Adrenal gland (tissue), 19 donors: ENCODE measurements at regions of chr15 and their contacts with region 1.

Region 1: GRCh38 chr15:58551764-58552504 is 120.1 kb downstream of the LIPC start:
- DNase-seq: peak in 2 of 7 donors; percentile 20 to 50
- H3K4me3 ChIP-seq: no peak overlapping the region
- H3K27ac ChIP-seq: peak overlapping the region in 2 of 5 donors; percentile 30 to 72
- H3K4me1 ChIP-seq: peaks cover 3 to 14% of the 10 kb centered on the region in 2 donors
- H3K27me3 ChIP-seq: no peaks in the 10 kb centered on the region
- CTCF ChIP-seq: no peak
- POLR2A ChIP-seq: no peak

Region 2: GRCh38 chr15:58269455-58270414 is 282.2 kb before region 1 on chr15:
- intact Hi-C with region 1: loop called in 1 of 2 experiments (anchors 10 kb)
- DNase-seq: peak in 6 of 7 donors; percentile 24 to 55 (median 39)
- H3K4me3 ChIP-seq: no peak overlapping the region
- H3K27ac ChIP-seq: no peak overlapping the region
- H3K4me1 ChIP-seq: no peaks in the 10 kb centered on the region
- H3K27me3 ChIP-seq: no peaks in the 10 kb centered on the region
- CTCF ChIP-seq: peak; percentile 42 to 68 (median 67)
- POLR2A ChIP-seq: no peak